Activated T-helper 1 cell treated with anti-CD3 and anti-CD28 coated beads, Interleukin-12 subunit alpha, Interleukin-12 subunit beta, Interleukin-2, Interleukin-4 antibody, amounts not matched to agents 30 ng/mL and 10 ng/mL and 1 ng/mL, durations not matched to agents 14 hours and 24 hours and 36 hours (primary cell): ENCODE measurements at regions of chr7 and their contacts with region 1.

Region 1: GRCh38 chr7:150962553-150963399 is 15.3 kb downstream of the KCNH2 start:
- DNase-seq: peak; percentile 39
- H3K4me3 Mint-ChIP-seq: no peak overlapping the region
- H3K27ac Mint-ChIP-seq: no peak overlapping the region
- H3K4me1 Mint-ChIP-seq: no peaks in the 10 kb centered on the region
- H3K27me3 Mint-ChIP-seq: peaks cover 28% of the 10 kb centered on the region

Region 2: DNA sequence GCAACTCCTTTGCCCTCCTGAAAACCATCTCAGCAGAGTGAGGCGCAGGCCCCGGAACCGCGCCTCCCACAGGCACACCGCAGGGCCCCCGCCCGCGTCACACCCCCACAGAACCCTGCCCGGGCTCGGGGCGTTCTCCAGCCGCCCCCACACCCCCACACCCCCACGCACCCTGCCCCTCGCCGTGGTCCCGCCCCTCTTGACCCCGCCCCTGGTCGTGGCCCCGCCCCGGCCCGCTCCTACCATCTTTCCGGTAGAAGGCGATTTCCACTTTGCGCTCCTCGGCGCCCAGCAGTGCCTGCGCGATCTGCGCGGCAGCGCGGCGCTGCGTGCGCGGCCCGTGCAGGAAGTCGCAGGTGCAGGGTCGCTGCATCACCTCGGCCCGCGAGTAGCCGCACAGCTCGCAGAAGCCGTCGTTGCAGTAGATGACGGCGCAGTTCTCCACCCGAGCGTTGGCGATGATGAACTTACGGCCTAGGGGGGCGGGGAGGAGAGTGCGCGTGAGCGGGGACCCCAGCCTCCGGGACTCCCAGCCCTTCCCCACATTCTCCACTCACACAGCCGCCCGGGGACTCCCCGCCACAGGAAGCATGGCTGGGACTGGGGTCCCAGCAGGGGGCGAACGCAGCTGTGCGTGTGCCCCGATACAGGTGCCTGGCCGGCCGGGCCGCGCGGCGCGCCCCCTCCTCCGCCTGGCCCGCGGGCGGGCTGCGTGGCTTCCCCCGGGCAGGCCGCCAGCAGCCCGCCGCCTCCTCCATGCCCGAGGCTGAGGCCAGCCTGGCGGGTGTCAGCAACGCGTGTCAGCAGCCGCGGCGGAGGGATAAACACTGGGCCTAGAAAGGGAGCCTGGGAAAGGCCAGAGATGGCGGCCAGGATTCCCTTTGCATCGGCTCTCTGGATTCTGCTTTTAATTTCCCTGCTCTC is 12.0 kb after region 1 on chr7:
- intact Hi-C with region 1: loop called (anchors 1 kb)
- DNase-seq: peak; percentile 73
- H3K4me3 Mint-ChIP-seq: peak overlapping the region; percentile 83
- H3K27ac Mint-ChIP-seq: peak overlapping the region; percentile 58
- H3K4me1 Mint-ChIP-seq: peaks cover 29% of the 10 kb centered on the region
- H3K27me3 Mint-ChIP-seq: peaks cover 25% of the 10 kb centered on the region